HepG2 (cell line): ENCODE measurements at regions of chr1 and their contacts with region 1.

Region 1: GRCh38 chr1:36703526-36704208 is 221.0 kb upstream of the CSF3R start:
- DNase-seq: peak; percentile 57
- ATAC-seq: peak; percentile 95
- H3K4me3 ChIP-seq: no peak overlapping the region
- H3K27ac ChIP-seq: no peak overlapping the region
- H3K4me1 ChIP-seq: no peaks in the 10 kb centered on the region
- H3K27me3 ChIP-seq: peaks cover 2 to 12% of the 10 kb centered on the region in 2 experiments; a peak in 3 of 5 replicates
- CTCF ChIP-seq: peak; percentile 94
- EP300 ChIP-seq: no peak
- POLR2A ChIP-seq: no peak
- RAD21 ChIP-seq: peak; percentile 83

Region 2: GRCh38 chr1:36864182-36864822 is 160.6 kb after region 1 on chr1:
- CTCF ChIA-PET with region 1: no interaction called
- POLR2A ChIA-PET with region 1: no interaction called
- in situ Hi-C with region 1: no loop called
- intact Hi-C with region 1: no loop called
- DNase-seq: no peak
- ATAC-seq: no peak
- H3K4me3 ChIP-seq: no peak overlapping the region
- H3K27ac ChIP-seq: no peak overlapping the region
- H3K4me1 ChIP-seq: no peaks in the 10 kb centered on the region
- H3K27me3 ChIP-seq: no peaks in the 10 kb centered on the region
- CTCF ChIP-seq: peak; percentile 35
- EP300 ChIP-seq: no peak
- POLR2A ChIP-seq: no peak
- RAD21 ChIP-seq: no peak

Region 3: DNA sequence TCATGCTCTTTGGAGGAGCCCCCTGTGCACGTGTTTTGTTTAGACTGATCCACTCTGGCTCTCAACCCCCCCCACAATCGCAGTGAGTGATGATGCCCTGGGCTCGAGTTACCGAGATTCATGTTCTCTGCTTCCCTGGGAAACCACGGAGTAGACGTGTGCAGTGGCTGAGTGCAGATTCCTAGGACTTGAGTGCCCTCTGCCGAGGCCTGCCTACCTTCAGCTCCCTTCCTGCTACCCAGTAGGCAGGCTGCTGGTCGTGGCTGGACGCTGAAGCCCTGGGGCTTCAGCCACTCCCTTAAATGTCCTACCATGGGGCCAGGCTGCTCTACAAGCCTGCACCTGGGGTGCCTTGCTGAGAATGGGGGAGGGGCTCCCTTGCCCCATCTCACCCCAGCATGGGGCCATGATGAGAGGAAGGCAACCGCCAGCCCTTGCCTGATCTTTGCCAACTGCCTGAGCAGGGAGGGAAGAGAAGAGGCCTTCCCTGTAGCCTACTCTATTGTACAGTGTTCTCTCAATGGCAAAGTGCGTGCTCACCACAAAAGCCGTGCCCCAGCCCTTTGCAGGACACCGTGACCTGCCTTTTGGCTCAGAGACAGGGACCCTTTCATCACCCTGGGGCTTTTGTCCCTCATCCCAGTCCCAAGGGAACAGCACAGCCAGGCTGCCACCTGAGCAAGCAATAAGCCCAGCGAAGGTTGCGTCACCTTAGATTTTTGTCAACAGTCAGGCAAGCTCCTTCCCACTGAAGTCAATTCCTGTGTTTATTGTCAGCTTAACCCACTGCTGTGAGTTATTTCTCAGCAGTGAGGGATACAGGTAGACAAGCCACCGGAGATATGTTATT is 334.8 kb after region 1 on chr1:
- CTCF ChIA-PET with region 1: no interaction called
- POLR2A ChIA-PET with region 1: no interaction called
- in situ Hi-C with region 1: loop called (anchors 25 kb)
- intact Hi-C with region 1: no loop called
- DNase-seq: no peak
- ATAC-seq: peak; percentile 69
- H3K4me3 ChIP-seq: no peak overlapping the region
- H3K27ac ChIP-seq: no peak overlapping the region
- H3K4me1 ChIP-seq: no peaks in the 10 kb centered on the region
- H3K27me3 ChIP-seq: peaks cover 5 to 24% of the 10 kb centered on the region in 2 experiments
- CTCF ChIP-seq: peak; percentile 54
- EP300 ChIP-seq: no peak
- POLR2A ChIP-seq: no peak
- RAD21 ChIP-seq: no peak

Region 4: DNA sequence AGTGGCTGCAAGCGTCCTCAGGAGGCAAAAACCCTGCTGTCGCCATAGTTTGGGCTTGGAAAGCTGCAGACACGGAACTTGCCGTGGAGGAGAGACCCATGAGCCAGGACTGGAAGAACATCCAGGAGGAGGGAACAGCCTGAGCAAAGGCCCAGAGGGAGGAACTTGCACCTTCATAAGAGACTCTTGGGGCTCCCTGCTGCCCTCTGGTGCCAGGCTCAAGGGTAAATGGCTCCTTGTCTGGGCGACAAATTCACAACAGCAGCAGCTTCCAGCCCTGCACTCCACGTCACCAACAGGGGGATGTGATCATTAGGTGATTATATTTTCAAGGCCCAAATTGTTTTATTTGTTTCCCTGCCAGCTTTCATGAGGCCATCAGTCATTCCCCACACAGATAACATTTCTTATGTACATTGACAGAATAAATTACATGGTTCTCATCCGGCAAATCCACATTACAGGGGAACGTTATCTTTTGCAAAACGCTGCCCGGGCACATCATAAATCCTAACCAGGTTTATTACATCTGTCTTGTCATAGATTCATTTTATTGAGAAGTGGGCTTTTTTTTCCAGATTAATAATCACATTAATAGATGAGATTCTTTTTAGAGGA is 473.7 kb after region 1 on chr1:
- CTCF ChIA-PET with region 1: interaction called, 11 read pairs
- POLR2A ChIA-PET with region 1: no interaction called
- in situ Hi-C with region 1: no loop called
- intact Hi-C with region 1: no loop called
- DNase-seq: peak; percentile 25
- ATAC-seq: peak; percentile 79
- H3K4me3 ChIP-seq: no peak overlapping the region
- H3K27ac ChIP-seq: no peak overlapping the region
- H3K4me1 ChIP-seq: no peaks in the 10 kb centered on the region
- H3K27me3 ChIP-seq: no peaks in the 10 kb centered on the region
- CTCF ChIP-seq: peak; percentile 58
- EP300 ChIP-seq: no peak
- POLR2A ChIP-seq: no peak
- RAD21 ChIP-seq: no peak

Region 5: DNA sequence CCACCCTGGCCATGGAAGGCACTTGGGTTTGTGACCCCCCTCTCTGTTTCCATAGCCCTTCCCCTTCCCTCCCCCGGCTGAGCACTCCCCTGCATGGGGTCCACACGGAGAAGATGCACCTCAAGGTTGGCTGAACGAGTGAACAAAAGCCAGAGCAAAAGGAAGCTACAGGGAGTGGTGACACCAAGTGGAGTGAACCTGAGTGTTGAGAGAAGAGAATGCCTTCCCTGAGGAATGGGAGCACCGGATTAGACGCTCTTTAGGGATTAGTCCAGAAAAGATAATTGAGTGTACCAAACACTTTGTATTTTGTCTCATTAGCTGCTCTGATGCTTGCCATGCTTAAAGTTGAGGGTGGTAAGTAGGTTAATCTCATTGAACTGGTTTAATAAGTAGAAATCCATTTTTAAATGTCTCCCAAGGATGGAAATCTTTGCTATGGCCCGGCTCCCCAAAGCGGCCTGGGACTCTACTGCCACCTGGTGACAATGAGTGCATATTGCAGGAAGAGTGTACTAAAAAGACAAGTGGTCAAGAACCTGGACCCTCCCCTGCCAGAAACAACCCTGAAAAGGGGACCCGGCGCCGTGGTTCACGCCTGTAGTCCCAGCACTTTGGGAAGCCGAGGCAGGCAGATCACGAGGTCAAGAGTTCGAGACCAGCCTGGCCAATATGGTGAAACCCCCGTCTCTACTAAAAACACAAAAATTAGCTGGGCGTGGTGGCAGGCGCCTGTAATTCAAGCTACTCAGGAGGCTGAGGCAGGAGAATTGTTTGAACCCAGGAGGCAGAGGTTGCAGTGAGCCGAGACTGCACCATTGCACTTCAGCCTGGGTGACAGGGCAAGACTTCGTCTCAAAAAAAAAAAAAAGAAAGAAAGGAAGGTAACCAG is 620.1 kb after region 1 on chr1:
- CTCF ChIA-PET with region 1: interaction called, 14 read pairs
- POLR2A ChIA-PET with region 1: no interaction called
- in situ Hi-C with region 1: no loop called
- intact Hi-C with region 1: loop called (anchors 5 kb)
- DNase-seq: peak; percentile 33
- ATAC-seq: no peak
- H3K4me3 ChIP-seq: no peak overlapping the region
- H3K27ac ChIP-seq: no peak overlapping the region
- H3K4me1 ChIP-seq: no peaks in the 10 kb centered on the region
- H3K27me3 ChIP-seq: peaks cover 0 to 12% of the 10 kb centered on the region in 2 experiments; a peak in 3 of 5 replicates
- CTCF ChIP-seq: peak; percentile 76
- EP300 ChIP-seq: no peak
- POLR2A ChIP-seq: no peak
- RAD21 ChIP-seq: 0 out of 2 replicates have a peak, but pooled peaks have one; percentile 32